ENCODE measurements at regions of chr17 and their contacts with region 1.

Region 1: GRCh38 chr17:59707114-59707970 is at the starts of genes PTRH2 and VMP1:
- DNase-seq: peak; percentile 97 to 100
- H3K4me3 ChIP-seq: peak within 1 kb of the TSS; percentile 91
- H3K27ac ChIP-seq: peak within 1 kb of the TSS; percentile 90
- H3K4me1 ChIP-seq: peaks cover 29% of the 10 kb centered on the region
- H3K27me3 ChIP-seq: no peaks in the 10 kb centered on the region
- CTCF ChIP-seq: no peak
- total RNA-seq, gene PTRH2: 23.3 and 25.9 TPM in 2 replicates
- total RNA-seq, gene VMP1: 222 and 236 TPM in 2 replicates

Region 2: GRCh38 chr17:58621174-58621573 is 1086.2 kb before region 1 on chr17:
- CTCF ChIA-PET with region 1: no interaction called
- POLR2A ChIA-PET with region 1: interaction called, 10 read pairs
- intact Hi-C with region 1: no loop called
- DNase-seq: no peak
- H3K4me3 ChIP-seq: no peak overlapping the region
- H3K27ac ChIP-seq: no peak overlapping the region
- H3K4me1 ChIP-seq: no peaks in the 10 kb centered on the region
- H3K27me3 ChIP-seq: 0 out of 2 replicates have a peak, but pooled peaks cover 5% of the 10 kb centered on the region
- CTCF ChIP-seq: no peak

Region 3: GRCh38 chr17:59791603-59792457 is 84.5 kb after region 1 on chr17:
- CTCF ChIA-PET with region 1: no interaction called
- POLR2A ChIA-PET with region 1: no interaction called
- intact Hi-C with region 1: no loop called
- DNase-seq: peak in 1 of 2 experiments; percentile 39
- H3K4me3 ChIP-seq: no peak overlapping the region
- H3K27ac ChIP-seq: peak overlapping the region; percentile 17
- H3K4me1 ChIP-seq: peaks cover 34% of the 10 kb centered on the region
- H3K27me3 ChIP-seq: no peaks in the 10 kb centered on the region
- CTCF ChIP-seq: no peak

Region 4: GRCh38 chr17:59846394-59847165 is 139.2 kb after region 1 on chr17:
- CTCF ChIA-PET with region 1: no interaction called
- POLR2A ChIA-PET with region 1: interaction called, 20 read pairs
- intact Hi-C with region 1: no loop called
- DNase-seq: peak; percentile 75 to 100
- H3K4me3 ChIP-seq: peak overlapping the region; percentile 46; the same call in 1 of the 2 replicates
- H3K27ac ChIP-seq: peak overlapping the region; percentile 99
- H3K4me1 ChIP-seq: peaks cover 76% of the 10 kb centered on the region
- H3K27me3 ChIP-seq: no peaks in the 10 kb centered on the region
- CTCF ChIP-seq: no peak

Region 5: GRCh38 chr17:59892924-59893676 is 185.8 kb after region 1 on chr17 and contains the starts of genes RPS6KB1 and TUBD1:
- CTCF ChIA-PET with region 1: no interaction called
- POLR2A ChIA-PET with region 1: no interaction called
- intact Hi-C with region 1: loop called (anchors 1 kb)
- DNase-seq: peak; percentile 96 to 97
- H3K4me3 ChIP-seq: peak within 1 kb of the TSS; percentile 75
- H3K27ac ChIP-seq: peak within 1 kb of the TSS; percentile 40
- H3K4me1 ChIP-seq: peaks cover 24% of the 10 kb centered on the region
- H3K27me3 ChIP-seq: no peaks in the 10 kb centered on the region
- CTCF ChIP-seq: peak; percentile 19; the same call in 1 of the 2 replicates
- total RNA-seq, gene RPS6KB1: 31.4 and 41.8 TPM in 2 replicates
- total RNA-seq, gene TUBD1: 11.8 and 13.5 TPM in 2 replicates